Activated CD4-positive, alpha-beta T cell treated with anti-CD3 and anti-CD28 coated beads for 36 hours (primary cell): ENCODE measurements at regions of chr4 and their contacts with region 1.

Region 1: DNA sequence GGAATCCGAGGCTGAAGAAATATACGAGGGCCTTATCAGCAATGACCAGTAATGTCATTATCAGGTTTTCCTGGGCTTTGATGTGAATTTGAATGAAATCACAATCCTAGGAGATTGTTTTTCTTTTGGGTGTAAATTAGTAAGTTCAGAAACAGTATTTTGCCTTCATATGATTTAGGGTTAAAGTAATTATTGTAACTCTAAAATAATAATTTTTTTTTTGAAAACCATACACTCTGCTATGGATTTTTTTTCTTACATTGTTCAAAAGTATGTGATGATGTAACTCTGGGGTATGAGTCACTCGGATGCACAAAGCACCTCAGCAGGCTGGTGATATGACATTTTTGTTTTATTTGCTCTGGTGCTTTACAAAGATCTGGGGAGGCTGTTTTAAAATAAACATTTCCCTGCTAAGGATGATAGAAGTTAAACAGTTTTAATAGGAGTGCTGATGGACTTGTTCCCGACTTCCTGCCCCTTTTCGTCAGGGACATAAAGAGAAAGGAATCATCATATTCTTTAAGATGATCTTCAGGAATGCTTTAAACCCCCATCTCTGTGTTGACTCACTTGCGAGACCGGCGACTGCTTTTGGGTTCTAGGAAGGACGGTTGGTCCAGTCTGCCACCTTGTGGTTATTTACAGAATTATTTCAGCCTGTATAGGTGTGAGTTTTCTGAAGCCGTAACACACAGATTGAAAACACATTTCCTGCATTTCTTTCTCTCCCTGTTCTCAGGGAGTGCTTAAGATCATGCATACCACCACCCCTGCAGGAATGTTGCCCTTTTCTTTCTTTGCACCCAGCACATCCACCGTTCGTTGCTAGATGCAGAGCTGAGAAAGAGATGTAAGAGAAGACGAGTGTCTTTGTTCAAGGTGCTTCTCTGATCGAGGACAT is 72.5 kb downstream of the RAPGEF2 start:
- DNase-seq: peak; percentile 71
- ATAC-seq: peak; percentile 69
- H3K4me3 Mint-ChIP-seq: no peak overlapping the region
- H3K27ac Mint-ChIP-seq: no peak overlapping the region
- H3K4me1 Mint-ChIP-seq: peaks cover 68% of the 10 kb centered on the region
- H3K27me3 Mint-ChIP-seq: no peaks in the 10 kb centered on the region

Region 2: GRCh38 chr4:158253350-158253980 is 921.9 kb before region 1 on chr4:
- CTCF ChIA-PET with region 1: no interaction called
- POLR2A ChIA-PET with region 1: no interaction called
- intact Hi-C with region 1: loop called in 1 of 2 experiments (anchors 10 kb)
- DNase-seq: peak; percentile 65
- ATAC-seq: peak; percentile 73
- H3K4me3 Mint-ChIP-seq: no peak overlapping the region
- H3K27ac Mint-ChIP-seq: no peak overlapping the region
- H3K4me1 Mint-ChIP-seq: no peaks in the 10 kb centered on the region
- H3K27me3 Mint-ChIP-seq: peaks cover 6% of the 10 kb centered on the region

Region 3: GRCh38 chr4:158578476-158578875 is 596.9 kb before region 1 on chr4:
- CTCF ChIA-PET with region 1: no interaction called
- POLR2A ChIA-PET with region 1: no interaction called
- intact Hi-C with region 1: no loop called
- DNase-seq: no peak
- ATAC-seq: no peak
- H3K4me3 Mint-ChIP-seq: no peak overlapping the region
- H3K27ac Mint-ChIP-seq: no peak overlapping the region
- H3K4me1 Mint-ChIP-seq: no peaks in the 10 kb centered on the region
- H3K27me3 Mint-ChIP-seq: peaks cover 2% of the 10 kb centered on the region

Region 4: DNA sequence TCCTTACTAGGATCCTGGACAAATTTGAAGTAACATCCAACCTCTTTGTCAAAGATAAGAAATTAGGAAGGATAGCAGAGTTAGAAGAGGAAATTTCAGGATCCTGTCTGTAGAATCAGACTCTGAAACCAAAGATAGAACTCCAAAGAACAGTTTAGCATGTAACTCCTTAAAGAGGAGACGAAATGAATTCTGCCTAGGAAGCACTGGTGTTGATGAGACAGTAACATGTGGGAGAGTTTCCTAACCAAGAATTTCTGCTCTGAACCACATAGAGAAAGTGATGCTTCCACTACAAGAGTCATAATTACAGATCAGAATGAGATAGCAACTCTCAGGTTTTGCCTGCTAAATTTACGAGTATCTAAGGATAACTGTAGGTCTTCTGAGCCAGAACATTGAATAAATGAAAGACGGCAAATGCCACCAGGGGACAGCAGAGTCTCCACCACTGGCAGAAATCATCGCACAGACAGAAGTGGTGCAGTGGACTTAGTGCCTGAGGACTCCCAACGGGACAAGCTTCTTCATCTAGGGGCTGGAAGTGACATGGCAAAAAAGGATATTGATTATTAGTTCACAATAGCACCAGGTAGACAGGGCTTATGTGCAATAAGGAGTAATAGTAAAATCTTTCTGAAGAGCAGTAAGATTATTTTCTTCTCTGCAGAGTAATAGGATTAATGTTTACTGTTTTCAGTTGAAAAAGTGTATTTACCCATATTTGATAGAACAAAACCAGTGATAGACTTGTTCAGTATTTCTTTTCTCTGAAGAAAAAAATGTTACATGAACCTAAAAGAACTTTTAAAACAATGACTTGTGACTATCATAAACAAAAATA is 445.4 kb before region 1 on chr4:
- CTCF ChIA-PET with region 1: interaction called, 3 read pairs
- POLR2A ChIA-PET with region 1: no interaction called
- intact Hi-C with region 1: loop called (anchors 1 to 2 kb)
- DNase-seq: peak; percentile 72
- ATAC-seq: peak; percentile 87
- H3K4me3 Mint-ChIP-seq: no peak overlapping the region
- H3K27ac Mint-ChIP-seq: no peak overlapping the region
- H3K4me1 Mint-ChIP-seq: peaks cover 25% of the 10 kb centered on the region
- H3K27me3 Mint-ChIP-seq: peaks cover 29% of the 10 kb centered on the region

Region 5: GRCh38 chr4:158768555-158769174 is 406.7 kb before region 1 on chr4 and contains the start of gene FNIP2:
- CTCF ChIA-PET with region 1: no interaction called
- POLR2A ChIA-PET with region 1: no interaction called
- intact Hi-C with region 1: loop called in 1 of 2 experiments (anchors 5 kb)
- DNase-seq: peak; percentile 81
- ATAC-seq: peak; percentile 81
- H3K4me3 Mint-ChIP-seq: peak within 1 kb of the TSS; percentile 97
- H3K27ac Mint-ChIP-seq: peak within 1 kb of the TSS; percentile 93
- H3K4me1 Mint-ChIP-seq: peaks cover 41% of the 10 kb centered on the region
- H3K27me3 Mint-ChIP-seq: no peaks in the 10 kb centered on the region
- total RNA-seq, gene FNIP2: 11.6 to 13.0 TPM

Region 6: GRCh38 chr4:158856852-158857251 is 318.5 kb before region 1 on chr4:
- CTCF ChIA-PET with region 1: interaction called, 7 read pairs
- POLR2A ChIA-PET with region 1: no interaction called
- intact Hi-C with region 1: loop called (anchors 1 kb)
- DNase-seq: no peak
- ATAC-seq: peak; percentile 87
- H3K4me3 Mint-ChIP-seq: no peak overlapping the region
- H3K27ac Mint-ChIP-seq: no peak overlapping the region
- H3K4me1 Mint-ChIP-seq: peaks cover 2% of the 10 kb centered on the region
- H3K27me3 Mint-ChIP-seq: no peaks in the 10 kb centered on the region

Region 7: DNA sequence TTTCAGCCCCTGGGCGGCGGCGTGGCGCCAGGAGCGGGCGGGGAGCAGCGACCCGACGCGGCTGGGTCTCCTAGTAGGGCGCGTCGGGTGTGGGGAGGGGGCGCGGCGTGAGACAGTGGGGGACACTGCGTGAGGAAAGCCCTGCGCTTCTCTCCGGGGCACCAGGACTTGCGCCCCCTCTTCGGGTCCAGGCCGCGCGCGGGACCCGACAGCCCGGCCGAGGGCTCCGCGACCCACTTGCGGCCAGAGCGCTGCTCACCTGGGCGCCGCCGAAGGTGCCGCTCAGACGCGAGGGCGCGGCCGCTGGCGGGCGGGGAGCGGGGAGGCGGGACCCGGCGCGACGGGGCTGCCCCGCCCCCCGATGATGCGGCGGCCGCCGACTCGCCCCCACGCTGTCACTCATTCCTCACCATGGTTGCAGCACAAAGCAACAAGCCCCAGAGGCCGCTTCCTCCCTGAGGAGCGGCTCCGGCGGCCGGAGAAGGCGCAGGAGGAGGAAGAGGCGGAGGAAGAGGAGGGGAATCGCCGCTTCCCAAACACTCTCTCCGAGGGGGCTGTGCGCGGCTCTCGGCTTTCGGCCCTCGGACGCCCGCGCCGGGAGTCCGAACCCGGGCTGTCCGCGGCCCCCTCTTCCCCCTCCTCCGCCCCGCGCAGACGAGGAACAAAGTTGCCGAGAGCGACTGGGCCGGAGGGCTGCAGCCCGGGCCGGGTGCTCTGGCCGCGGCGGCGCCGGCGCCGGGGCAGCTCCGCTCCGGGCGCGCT is 72.5 kb before region 1 on chr4 and contains the start of gene RAPGEF2:
- CTCF ChIA-PET with region 1: interaction called, 4 read pairs
- POLR2A ChIA-PET with region 1: no interaction called
- intact Hi-C with region 1: loop called (anchors 1 to 5 kb)
- DNase-seq: peak; percentile 94
- ATAC-seq: peak; percentile 83
- H3K4me3 Mint-ChIP-seq: peak within 1 kb of the TSS; percentile 73
- H3K27ac Mint-ChIP-seq: peak within 1 kb of the TSS; percentile 70
- H3K4me1 Mint-ChIP-seq: peaks cover 49% of the 10 kb centered on the region
- H3K27me3 Mint-ChIP-seq: peaks cover 2% of the 10 kb centered on the region
- total RNA-seq, gene RAPGEF2: 18.5 to 20.2 TPM

Region 8: DNA sequence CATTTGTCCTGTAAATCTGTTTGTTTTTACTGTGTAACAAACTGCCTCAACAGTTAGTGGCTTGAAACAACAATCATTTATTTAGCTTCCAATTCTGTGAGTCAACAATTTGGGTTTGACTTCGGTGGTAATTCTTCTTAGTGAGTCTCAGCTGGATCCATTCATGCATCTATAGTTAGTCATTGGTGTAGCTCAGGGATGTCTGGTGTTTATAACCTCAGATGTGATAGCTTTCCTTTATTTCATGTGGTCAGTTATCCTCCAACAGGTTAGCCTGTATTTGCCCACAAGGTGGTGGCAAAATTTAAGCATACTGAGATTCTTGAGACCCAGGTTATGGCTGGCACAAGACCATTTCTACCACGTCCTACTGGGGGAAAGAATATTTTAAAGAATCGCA is 1194.7 kb after region 1 on chr4:
- CTCF ChIA-PET with region 1: no interaction called
- POLR2A ChIA-PET with region 1: no interaction called
- intact Hi-C with region 1: no loop called
- DNase-seq: no peak
- ATAC-seq: no peak
- H3K4me3 Mint-ChIP-seq: no peak overlapping the region
- H3K27ac Mint-ChIP-seq: no peak overlapping the region
- H3K4me1 Mint-ChIP-seq: no peaks in the 10 kb centered on the region
- H3K27me3 Mint-ChIP-seq: no peaks in the 10 kb centered on the region